ENCODE measurements at regions of chr3 and their contacts with region 1.

Region 1: GRCh38 chr3:189386739-189387138 is 215.0 kb downstream of the TPRG1 start:
- DNase-seq: no peak
- H3K4me3 ChIP-seq: no peak overlapping the region
- H3K27ac ChIP-seq: no peak overlapping the region
- H3K4me1 ChIP-seq: peaks cover 0 to 9% (median 1%) of the 10 kb centered on the region in 4 experiments; a peak in 2 of 7 replicates
- H3K27me3 ChIP-seq: no peaks in the 10 kb centered on the region
- CTCF ChIP-seq: no peak
- EP300 ChIP-seq: no peak
- POLR2A ChIP-seq: no peak
- RAD21 ChIP-seq: no peak

Region 2: DNA sequence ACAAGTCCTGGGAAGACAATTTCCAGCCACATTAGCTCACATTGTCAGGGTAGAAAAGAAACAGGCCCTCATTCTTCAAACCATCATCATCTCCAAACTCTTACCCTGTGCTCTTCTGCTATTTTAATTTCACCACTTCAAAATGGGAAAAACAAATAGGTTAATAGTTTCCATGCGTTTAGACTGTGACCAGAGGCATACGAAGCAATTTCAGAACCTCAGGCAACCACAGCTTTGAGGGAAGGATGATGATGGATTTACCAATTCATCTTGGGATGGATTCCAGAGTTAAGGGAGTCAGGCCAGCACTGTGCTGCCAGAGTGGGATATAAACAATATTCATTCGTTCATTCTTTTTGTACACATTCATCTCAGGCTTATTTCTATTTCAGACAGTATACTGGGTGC is 522.7 kb before region 1 on chr3:
- CTCF ChIA-PET with region 1: no interaction called
- POLR2A ChIA-PET with region 1: no interaction called
- DNase-seq: no peak
- H3K4me3 ChIP-seq: no peak overlapping the region
- H3K27ac ChIP-seq: no peak overlapping the region
- H3K4me1 ChIP-seq: no peaks in the 10 kb centered on the region
- H3K27me3 ChIP-seq: no peaks in the 10 kb centered on the region
- CTCF ChIP-seq: no peak
- EP300 ChIP-seq: no peak
- POLR2A ChIP-seq: no peak
- RAD21 ChIP-seq: no peak

Region 3: GRCh38 chr3:189372243-189372642 is 14.5 kb before region 1 on chr3:
- CTCF ChIA-PET with region 1: interaction called, 10 read pairs
- POLR2A ChIA-PET with region 1: no interaction called
- DNase-seq: no peak
- H3K4me3 ChIP-seq: no peak overlapping the region
- H3K27ac ChIP-seq: no peak overlapping the region
- H3K4me1 ChIP-seq: peaks cover 0 to 6% (median 0%) of the 10 kb centered on the region in 4 experiments; a peak in 1 of 7 replicates
- H3K27me3 ChIP-seq: peaks cover 0 to 1% (median 0%) of the 10 kb centered on the region in 4 experiments; a peak in 1 of 7 replicates
- CTCF ChIP-seq: no peak
- EP300 ChIP-seq: no peak
- POLR2A ChIP-seq: no peak
- RAD21 ChIP-seq: no peak